ENCODE measurements at regions of chr5 and their contacts with region 1.

Region 1: GRCh38 chr5:55421074-55421529 is 113.3 kb downstream of the MTREX start:
- DNase-seq: no peak
- H3K4me3 Mint-ChIP-seq: no peak overlapping the region
- H3K27ac Mint-ChIP-seq: peak overlapping the region; percentile 16
- H3K4me1 Mint-ChIP-seq: peaks cover 17% of the 10 kb centered on the region
- H3K27me3 Mint-ChIP-seq: no peaks in the 10 kb centered on the region

Region 2: GRCh38 chr5:55338810-55339243 is 82.3 kb before region 1 on chr5:
- intact Hi-C with region 1: loop called (anchors 5 kb)
- DNase-seq: peak; percentile 64
- H3K4me3 Mint-ChIP-seq: peak overlapping the region; percentile 55
- H3K27ac Mint-ChIP-seq: peak overlapping the region; percentile 85
- H3K4me1 Mint-ChIP-seq: peaks cover 20% of the 10 kb centered on the region
- H3K27me3 Mint-ChIP-seq: no peaks in the 10 kb centered on the region

Region 3: GRCh38 chr5:55439008-55439407 is 17.9 kb after region 1 on chr5:
- intact Hi-C with region 1: loop called (anchors 2 kb)
- DNase-seq: no peak
- H3K4me3 Mint-ChIP-seq: no peak overlapping the region
- H3K27ac Mint-ChIP-seq: peak overlapping the region; percentile 64
- H3K4me1 Mint-ChIP-seq: peaks cover 31% of the 10 kb centered on the region
- H3K27me3 Mint-ChIP-seq: no peaks in the 10 kb centered on the region

Region 4: GRCh38 chr5:55456216-55456895 is 35.3 kb after region 1 on chr5:
- intact Hi-C with region 1: loop called (anchors 1 kb)
- DNase-seq: no peak
- H3K4me3 Mint-ChIP-seq: no peak overlapping the region
- H3K27ac Mint-ChIP-seq: peak overlapping the region; percentile 45
- H3K4me1 Mint-ChIP-seq: peaks cover 15% of the 10 kb centered on the region
- H3K27me3 Mint-ChIP-seq: no peaks in the 10 kb centered on the region

Region 5: GRCh38 chr5:55471468-55471867 is 50.4 kb after region 1 on chr5:
- intact Hi-C with region 1: no loop called
- DNase-seq: no peak
- H3K4me3 Mint-ChIP-seq: no peak overlapping the region
- H3K27ac Mint-ChIP-seq: no peak overlapping the region
- H3K4me1 Mint-ChIP-seq: peaks cover 10% of the 10 kb centered on the region
- H3K27me3 Mint-ChIP-seq: no peaks in the 10 kb centered on the region

Region 6: DNA sequence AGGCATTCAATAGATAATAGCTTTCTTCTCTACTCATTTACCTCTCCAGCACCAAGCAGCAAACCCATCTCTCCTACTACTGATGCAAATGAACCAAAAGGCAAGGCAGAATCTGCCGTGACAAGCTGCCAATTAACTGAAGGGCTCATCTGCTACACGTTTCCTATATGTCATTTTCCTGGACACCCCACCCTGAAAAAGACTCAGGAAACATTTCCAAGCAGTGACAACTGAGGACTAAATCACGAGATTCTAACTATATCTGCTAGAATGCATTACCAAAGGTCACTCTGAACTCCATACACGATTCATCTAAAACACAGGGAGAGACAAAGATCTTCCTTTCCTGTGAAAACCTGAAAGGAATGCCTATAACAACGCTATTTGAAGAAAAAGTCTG is 100.8 kb after region 1 on chr5:
- intact Hi-C with region 1: no loop called
- DNase-seq: no peak
- H3K4me3 Mint-ChIP-seq: no peak overlapping the region
- H3K27ac Mint-ChIP-seq: no peak overlapping the region
- H3K4me1 Mint-ChIP-seq: peaks cover 14% of the 10 kb centered on the region
- H3K27me3 Mint-ChIP-seq: no peaks in the 10 kb centered on the region